Thyroid gland (tissue), 4 donors: ENCODE measurements at regions of chr1 and their contacts with region 1.

Region 1: DNA sequence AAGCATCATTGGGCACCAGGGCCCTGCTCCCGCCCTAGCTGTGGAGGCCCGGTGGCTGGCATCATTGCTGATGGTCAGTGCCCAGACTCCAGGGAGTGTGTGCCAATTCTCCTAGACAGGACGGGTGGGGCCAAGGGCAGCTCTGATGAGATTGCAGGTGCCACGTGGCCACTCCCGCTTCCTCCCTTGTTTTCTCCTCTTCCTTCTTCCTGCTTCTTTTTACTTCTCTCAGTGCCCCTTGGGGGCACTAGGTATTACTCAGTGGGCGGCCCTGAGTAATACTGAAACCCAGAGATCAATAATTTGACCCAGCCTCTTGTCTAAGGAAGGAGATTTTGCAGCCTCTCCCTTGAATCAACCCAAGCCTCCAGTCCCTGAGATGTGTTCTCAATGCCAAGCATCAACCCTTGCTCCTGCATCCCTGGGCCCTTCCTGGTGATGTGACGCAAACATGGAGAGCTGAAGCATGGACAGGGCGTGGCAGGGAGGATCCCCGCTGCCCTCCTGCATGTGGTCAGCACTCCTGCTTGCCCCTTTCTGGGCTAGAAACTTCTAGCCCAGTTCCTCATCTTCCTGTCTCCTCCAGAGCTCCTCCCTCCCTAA is 32.4 kb downstream of the CDK18 start:
- DNase-seq: no peak
- H3K4me3 ChIP-seq: no peak overlapping the region
- H3K27ac ChIP-seq: no peak overlapping the region
- H3K4me1 ChIP-seq: no peaks in the 10 kb centered on the region
- H3K27me3 ChIP-seq: no peaks in the 10 kb centered on the region
- CTCF ChIP-seq: no peak
- POLR2A ChIP-seq: no peak

Region 2: DNA sequence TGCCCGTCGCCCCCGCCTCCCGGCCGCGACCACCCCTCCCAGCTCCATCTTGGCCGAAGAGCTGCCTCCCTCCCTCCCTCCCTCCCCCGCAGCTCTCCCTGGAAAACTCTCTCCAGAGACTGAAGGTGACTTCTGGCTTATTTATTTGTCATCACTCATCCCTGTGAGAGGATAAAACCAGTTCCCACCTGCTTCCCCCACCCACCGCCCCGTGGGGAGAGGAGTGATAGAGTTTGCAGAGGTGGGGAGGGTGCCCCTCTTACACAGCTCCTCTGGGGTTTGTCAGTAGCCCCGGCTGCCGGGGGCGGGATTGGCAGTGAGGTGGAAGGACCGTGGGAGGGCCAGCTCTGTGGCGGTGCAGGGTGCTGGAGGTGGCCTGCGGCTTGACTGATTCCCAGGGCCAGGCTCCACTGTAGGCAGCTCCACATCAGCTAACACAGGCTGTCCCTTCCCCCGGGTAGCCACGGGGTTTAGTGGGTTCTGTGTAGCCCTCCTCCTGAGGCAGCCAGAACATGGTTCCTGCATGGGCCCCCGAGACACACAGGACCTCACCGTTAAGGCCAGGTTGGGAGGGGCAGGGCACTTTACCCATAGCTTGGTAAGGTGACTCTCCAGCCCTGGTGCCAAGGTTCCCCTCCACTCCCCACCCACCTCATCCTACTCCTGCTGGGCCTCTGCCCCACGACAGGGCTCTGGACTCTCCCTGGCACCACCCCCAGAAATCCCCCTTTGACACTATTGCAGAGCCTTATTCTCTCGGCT is 32.7 kb after region 1 on chr1:
- intact Hi-C with region 1: loop called (anchors 5 kb)
- DNase-seq: no peak
- H3K4me3 ChIP-seq: no peak overlapping the region
- H3K27ac ChIP-seq: no peak overlapping the region
- H3K4me1 ChIP-seq: peaks cover 0 to 13% of the 10 kb centered on the region in 2 donors
- H3K27me3 ChIP-seq: no peaks in the 10 kb centered on the region
- CTCF ChIP-seq: no peak
- POLR2A ChIP-seq: no peak

Region 3: DNA sequence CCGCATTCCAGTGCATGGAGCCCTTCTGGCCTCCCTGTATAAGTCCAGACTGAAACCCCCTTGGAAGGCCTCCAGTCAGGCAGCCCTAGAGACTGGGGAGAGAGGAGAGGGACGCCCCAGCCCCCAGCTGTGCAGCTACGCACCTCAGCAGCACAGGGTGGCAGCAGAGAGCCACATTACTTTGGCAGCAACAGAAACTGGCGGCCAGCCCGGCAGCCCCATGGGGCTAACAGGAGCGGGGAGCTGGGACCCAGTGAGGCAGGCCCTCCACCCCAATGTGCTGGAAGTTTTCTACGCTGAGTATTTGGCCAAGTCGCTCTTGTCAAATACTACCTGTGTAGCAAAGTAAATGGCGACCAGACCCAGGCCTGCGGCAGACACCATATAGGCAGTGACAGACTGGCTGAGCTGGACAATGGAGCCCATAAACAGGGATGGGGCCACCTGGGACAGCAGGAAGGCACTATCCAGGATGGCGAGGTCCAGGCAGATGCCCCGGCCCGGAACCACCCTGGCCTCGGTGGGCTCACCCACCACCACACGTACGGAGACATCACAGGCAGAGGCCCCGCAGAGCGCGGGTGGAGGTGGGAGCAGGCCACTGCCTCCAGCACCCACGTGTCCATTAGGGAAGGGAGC is 122.2 kb after region 1 on chr1:
- intact Hi-C with region 1: loop called (anchors 10 kb)
- DNase-seq: peak; percentile 83 to 87
- H3K4me3 ChIP-seq: no peak overlapping the region
- H3K27ac ChIP-seq: no peak overlapping the region
- H3K4me1 ChIP-seq: peaks cover 4 to 6% of the 10 kb centered on the region in 2 donors
- H3K27me3 ChIP-seq: no peaks in the 10 kb centered on the region
- CTCF ChIP-seq: peak; percentile 47 to 96 (median 88)
- POLR2A ChIP-seq: no peak